HEK293 (cell line): ENCODE measurements at regions of chr12 and their contacts with region 1.

Region 1: GRCh38 chr12:55675666-55676065 is 32.0 kb downstream of the ITGA7 start:
- H3K4me3 ChIP-seq: no peak overlapping the region
- H3K27ac ChIP-seq: no peak overlapping the region
- H3K4me1 ChIP-seq: no peaks in the 10 kb centered on the region
- CTCF ChIP-seq: no peak

Region 2: GRCh38 chr12:55659486-55660385 is 15.9 kb before region 1 on chr12:
- CTCF ChIA-PET with region 1: interaction called, 16 read pairs
- POLR2A ChIA-PET with region 1: no interaction called
- H3K4me3 ChIP-seq: no peak overlapping the region
- H3K27ac ChIP-seq: no peak overlapping the region
- H3K4me1 ChIP-seq: no peaks in the 10 kb centered on the region
- CTCF ChIP-seq: peak; percentile 64

Region 3: GRCh38 chr12:55688716-55689655 is 13.3 kb after region 1 on chr12:
- CTCF ChIA-PET with region 1: no interaction called
- POLR2A ChIA-PET with region 1: no interaction called
- H3K4me3 ChIP-seq: no peak overlapping the region
- H3K27ac ChIP-seq: no peak overlapping the region
- H3K4me1 ChIP-seq: no peaks in the 10 kb centered on the region
- CTCF ChIP-seq: no peak

Region 4: GRCh38 chr12:56286044-56286830 is 610.6 kb after region 1 on chr12:
- CTCF ChIA-PET with region 1: no interaction called
- POLR2A ChIA-PET with region 1: no interaction called
- H3K4me3 ChIP-seq: no peak overlapping the region
- H3K27ac ChIP-seq: no peak overlapping the region
- H3K4me1 ChIP-seq: no peaks in the 10 kb centered on the region
- CTCF ChIP-seq: no peak